Breast epithelium (tissue), 4 donors: ENCODE measurements at regions of chr12 and their contacts with region 1.

Region 1: DNA sequence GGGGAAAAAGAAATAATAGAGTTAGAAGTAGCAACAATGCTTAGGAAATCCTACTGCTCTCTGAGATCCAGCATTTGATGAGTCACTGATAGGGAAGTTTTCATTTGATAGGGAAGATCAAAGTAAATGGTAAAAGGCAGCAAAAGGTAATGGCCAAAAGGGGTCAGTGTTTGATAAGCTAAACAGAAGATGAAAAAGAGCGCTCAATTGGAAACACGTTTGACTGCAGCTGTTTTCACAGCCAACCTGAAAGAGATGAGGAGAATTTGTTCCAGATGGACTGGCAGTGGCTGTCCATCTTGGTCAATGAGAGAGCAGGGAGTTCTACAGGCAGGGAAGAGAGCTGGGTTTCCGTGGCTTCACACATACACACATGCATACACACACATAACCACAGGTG is 264.2 kb downstream of the TMEM132C start:
- DNase-seq: no peak
- H3K4me3 ChIP-seq: no peak overlapping the region
- H3K27ac ChIP-seq: no peak overlapping the region
- H3K4me1 ChIP-seq: no peaks in the 10 kb centered on the region
- H3K27me3 ChIP-seq: no peaks in the 10 kb centered on the region
- CTCF ChIP-seq: no peak
- POLR2A ChIP-seq: no peak

Region 2: GRCh38 chr12:128507470-128507869 is 23.7 kb before region 1 on chr12:
- intact Hi-C with region 1: loop called (anchors 2 kb)
- DNase-seq: no peak
- H3K4me3 ChIP-seq: no peak overlapping the region
- H3K27ac ChIP-seq: no peak overlapping the region
- H3K4me1 ChIP-seq: no peaks in the 10 kb centered on the region
- H3K27me3 ChIP-seq: no peaks in the 10 kb centered on the region
- CTCF ChIP-seq: no peak
- POLR2A ChIP-seq: no peak

Region 3: DNA sequence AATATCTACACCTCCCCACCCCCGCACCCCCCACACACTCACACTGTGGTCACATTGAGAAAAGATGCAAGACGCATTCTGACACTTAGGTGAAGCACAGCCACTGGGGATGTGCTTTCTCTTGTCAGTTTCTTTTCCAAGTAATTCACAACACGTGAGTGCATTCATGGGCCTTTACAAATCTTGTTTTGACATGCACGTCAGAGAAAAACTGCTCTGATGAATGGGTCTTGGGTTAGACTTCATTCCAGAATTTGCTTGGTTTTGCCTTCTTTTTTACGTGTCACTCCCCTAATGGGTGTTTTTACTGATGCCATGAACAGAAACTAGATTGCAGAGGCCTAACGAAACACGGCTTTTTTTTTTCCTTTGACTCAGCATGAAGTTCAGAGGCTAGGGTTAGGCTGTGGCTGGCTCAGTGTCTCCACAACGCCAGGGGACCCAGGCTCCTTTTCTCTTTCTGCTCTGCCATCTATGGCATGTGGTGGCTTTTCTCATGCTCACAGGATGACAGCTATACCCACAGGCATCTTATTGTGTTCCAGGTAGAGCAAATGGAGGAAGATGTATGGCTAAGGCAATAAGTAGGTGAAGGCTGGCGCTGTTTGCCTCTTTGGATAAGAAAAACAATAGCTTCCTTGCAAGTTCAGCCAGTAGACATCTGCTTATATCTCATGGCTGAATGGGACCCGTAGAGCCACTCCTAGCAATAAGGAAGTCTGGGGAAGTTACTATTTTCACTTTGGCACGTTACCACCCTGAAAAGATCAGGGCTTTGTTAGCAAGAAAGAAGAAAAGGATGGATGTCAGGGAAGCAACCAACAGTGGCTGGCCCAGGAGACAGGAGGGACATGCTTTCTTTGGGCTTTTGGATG is 39.3 kb after region 1 on chr12:
- intact Hi-C with region 1: no loop called
- DNase-seq: no peak
- H3K4me3 ChIP-seq: no peak overlapping the region
- H3K27ac ChIP-seq: no peak overlapping the region
- H3K4me1 ChIP-seq: no peaks in the 10 kb centered on the region
- H3K27me3 ChIP-seq: no peaks in the 10 kb centered on the region
- CTCF ChIP-seq: no peak
- POLR2A ChIP-seq: no peak

Region 4: GRCh38 chr12:128594521-128594920 is 63.4 kb after region 1 on chr12:
- intact Hi-C with region 1: no loop called
- DNase-seq: no peak
- H3K4me3 ChIP-seq: no peak overlapping the region
- H3K27ac ChIP-seq: no peak overlapping the region
- H3K4me1 ChIP-seq: no peaks in the 10 kb centered on the region
- H3K27me3 ChIP-seq: no peaks in the 10 kb centered on the region
- CTCF ChIP-seq: no peak
- POLR2A ChIP-seq: no peak